SK-N-SH (cell line): ENCODE measurements at regions of chr20 and their contacts with region 1.

Region 1: DNA sequence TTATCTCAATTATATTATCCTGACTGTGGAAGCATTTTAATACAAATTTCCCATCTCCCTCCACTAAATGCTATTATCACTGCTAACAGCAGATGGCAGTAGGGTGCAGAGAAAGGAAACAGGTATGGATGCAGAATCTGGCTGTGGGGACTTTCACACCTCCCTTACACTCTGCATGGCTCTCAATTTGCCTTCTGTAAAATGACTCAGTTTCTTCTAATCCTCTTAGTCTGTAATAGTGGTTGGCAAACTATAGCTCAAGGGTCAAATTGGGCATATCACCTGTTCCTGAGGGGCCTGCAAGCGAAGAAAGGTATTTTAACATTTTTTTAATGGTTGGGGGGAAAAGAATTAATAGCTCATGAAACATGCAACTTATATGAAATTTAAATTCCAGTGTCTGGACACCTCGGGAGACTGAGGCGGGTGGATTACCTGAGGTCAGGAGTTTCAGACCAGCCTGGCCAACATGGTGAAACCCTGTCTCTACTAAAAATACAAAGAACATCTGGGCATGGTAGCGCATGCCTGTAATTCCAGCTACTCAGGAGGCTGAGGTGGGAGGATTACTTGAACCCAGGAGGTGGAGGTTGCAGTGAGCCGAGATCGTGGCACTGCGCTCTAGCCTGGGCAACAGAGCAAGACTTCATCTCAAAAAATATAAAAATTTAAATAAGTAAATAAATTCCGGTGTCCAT is 83.5 kb downstream of the ZMYND8 start:
- DNase-seq: peak; percentile 73
- H3K4me3 ChIP-seq: no peak overlapping the region; a peak in 1 of 4 replicates
- H3K27ac ChIP-seq: peak overlapping the region in 1 of 2 experiments; percentile 97; a peak in 2 of 4 replicates
- H3K4me1 ChIP-seq: peaks cover 20 to 48% of the 10 kb centered on the region in 2 experiments
- H3K27me3 ChIP-seq: no peaks in the 10 kb centered on the region
- CTCF ChIP-seq: peak; percentile 95
- EP300 ChIP-seq: no peak
- RAD21 ChIP-seq: peak; percentile 95

Region 2: GRCh38 chr20:47055699-47056369 is 217.2 kb before region 1 on chr20:
- CTCF ChIA-PET with region 1: no interaction called
- POLR2A ChIA-PET with region 1: no interaction called
- DNase-seq: no peak
- H3K4me3 ChIP-seq: no peak overlapping the region
- H3K27ac ChIP-seq: no peak overlapping the region
- H3K4me1 ChIP-seq: peaks cover 0 to 4% of the 10 kb centered on the region in 2 experiments; a peak in 1 of 4 replicates
- H3K27me3 ChIP-seq: no peaks in the 10 kb centered on the region; the same call in 1 of the 2 replicates
- CTCF ChIP-seq: no peak
- EP300 ChIP-seq: no peak
- RAD21 ChIP-seq: no peak

Region 3: GRCh38 chr20:47066484-47067186 is 206.4 kb before region 1 on chr20:
- CTCF ChIA-PET with region 1: no interaction called
- POLR2A ChIA-PET with region 1: no interaction called
- DNase-seq: no peak
- H3K4me3 ChIP-seq: no peak overlapping the region
- H3K27ac ChIP-seq: no peak overlapping the region
- H3K4me1 ChIP-seq: no peaks in the 10 kb centered on the region; a peak in 1 of 4 replicates
- H3K27me3 ChIP-seq: no peaks in the 10 kb centered on the region; the same call in 1 of the 2 replicates
- CTCF ChIP-seq: no peak
- EP300 ChIP-seq: no peak
- RAD21 ChIP-seq: no peak

Region 4: DNA sequence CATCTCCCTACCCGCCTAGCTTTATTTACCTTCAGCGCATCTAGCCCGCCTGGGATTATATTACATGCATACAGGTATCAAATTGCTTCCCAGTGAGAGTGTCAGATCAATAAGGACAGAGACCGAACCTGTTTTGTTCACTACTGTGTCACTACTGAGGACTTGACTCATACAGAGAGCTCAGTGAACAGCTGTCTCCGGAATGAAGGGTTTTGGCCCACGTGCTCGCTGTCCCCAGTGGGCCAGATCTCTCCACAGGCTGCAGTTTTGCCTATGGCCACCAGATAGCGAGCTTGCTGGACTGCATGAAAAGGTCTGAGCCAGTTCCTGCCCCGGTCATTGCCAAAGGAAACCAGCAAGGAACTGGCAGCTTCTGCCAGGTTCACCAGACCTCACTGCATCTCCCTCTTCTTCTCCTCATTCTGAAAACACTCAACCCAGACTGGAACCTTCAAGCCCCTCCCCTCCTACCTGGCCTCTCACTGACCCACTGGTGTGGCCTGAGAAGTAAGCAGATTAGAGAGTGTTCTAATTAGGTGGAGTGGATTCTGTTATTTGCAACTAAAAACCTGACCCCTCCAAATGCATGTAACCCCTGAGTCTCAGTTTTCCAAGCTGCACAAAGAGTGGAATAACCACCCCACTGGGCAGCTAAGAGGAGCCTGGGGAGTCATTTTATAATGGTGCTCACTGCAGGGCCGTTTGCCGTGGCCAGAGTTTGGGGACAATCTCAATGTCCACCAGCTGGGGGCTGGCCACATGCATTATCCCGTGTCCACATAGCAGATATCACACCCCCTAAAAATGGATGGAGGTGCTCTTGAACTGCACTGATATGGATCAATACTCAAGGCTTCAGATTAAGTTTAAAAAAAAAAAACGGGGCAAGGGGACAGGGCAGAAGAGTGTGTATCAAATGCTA is 67.2 kb before region 1 on chr20:
- CTCF ChIA-PET with region 1: interaction called, 48 read pairs
- POLR2A ChIA-PET with region 1: no interaction called
- DNase-seq: peak; percentile 78
- H3K4me3 ChIP-seq: no peak overlapping the region
- H3K27ac ChIP-seq: no peak overlapping the region; a peak in 1 of 4 replicates
- H3K4me1 ChIP-seq: peaks cover 0 to 3% of the 10 kb centered on the region in 2 experiments; a peak in 1 of 4 replicates
- H3K27me3 ChIP-seq: no peaks in the 10 kb centered on the region
- CTCF ChIP-seq: peak; percentile 78
- EP300 ChIP-seq: no peak
- RAD21 ChIP-seq: peak; percentile 74

Region 5: GRCh38 chr20:47286681-47287080 is 13.6 kb after region 1 on chr20:
- CTCF ChIA-PET with region 1: interaction called, 56 read pairs
- POLR2A ChIA-PET with region 1: no interaction called
- DNase-seq: no peak
- H3K4me3 ChIP-seq: no peak overlapping the region
- H3K27ac ChIP-seq: no peak overlapping the region
- H3K4me1 ChIP-seq: peaks cover 0 to 10% of the 10 kb centered on the region in 2 experiments; a peak in 2 of 4 replicates
- H3K27me3 ChIP-seq: no peaks in the 10 kb centered on the region
- CTCF ChIP-seq: no peak
- EP300 ChIP-seq: no peak
- RAD21 ChIP-seq: no peak

Region 6: DNA sequence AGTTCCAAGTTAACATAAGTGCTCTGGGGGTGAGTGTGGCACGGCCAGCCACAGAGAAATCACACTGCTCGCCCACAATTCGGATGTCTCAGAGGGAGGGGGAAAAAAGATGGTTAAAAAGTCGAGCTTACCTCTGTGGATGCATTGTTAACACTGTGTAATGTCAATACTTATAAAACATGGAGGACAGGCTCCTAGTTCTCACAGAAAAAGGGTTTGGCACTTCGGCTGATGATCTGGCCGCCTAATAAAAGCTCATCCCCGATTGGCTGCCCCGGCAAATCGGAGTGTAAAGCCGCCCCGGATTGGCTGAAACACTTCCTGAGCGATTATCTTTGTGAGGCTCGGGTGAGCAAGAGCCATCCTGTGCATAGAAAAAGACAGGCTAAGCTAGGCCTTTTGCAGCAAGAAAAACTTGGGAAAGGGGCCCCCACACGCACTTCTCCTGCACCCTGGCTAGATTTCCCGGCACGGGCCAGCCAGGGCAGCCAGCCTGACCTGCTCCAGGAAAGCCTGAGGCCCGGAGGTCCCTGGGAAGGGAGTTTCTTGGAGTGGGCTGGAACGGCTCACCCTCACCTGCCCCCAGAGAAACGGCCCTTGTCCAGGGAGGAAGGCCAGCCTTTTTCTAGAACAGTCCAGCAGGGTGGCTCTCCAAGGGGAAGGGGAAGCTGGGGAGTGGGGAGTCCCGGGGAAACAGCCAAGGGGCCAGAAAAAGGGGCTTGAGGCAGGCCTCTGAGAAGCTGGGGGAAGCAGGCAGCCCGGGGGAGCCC is 83.7 kb after region 1 on chr20 and contains the start of gene ZMYND8:
- CTCF ChIA-PET with region 1: interaction called, 99 read pairs
- POLR2A ChIA-PET with region 1: interaction called, 4 read pairs
- DNase-seq: peak; percentile 87
- H3K4me3 ChIP-seq: peak within 1 kb of the TSS; percentile 42 to 52
- H3K27ac ChIP-seq: peak within 1 kb of the TSS; percentile 97 to 100
- H3K4me1 ChIP-seq: peaks cover 75 to 89% of the 10 kb centered on the region in 2 experiments
- H3K27me3 ChIP-seq: no peaks in the 10 kb centered on the region
- CTCF ChIP-seq: no peak
- EP300 ChIP-seq: no peak
- RAD21 ChIP-seq: no peak
- polyA plus RNA-seq, gene ZMYND8: 20.6 and 25.3 TPM in 2 replicates

Region 7: GRCh38 chr20:47392015-47392720 is 119.1 kb after region 1 on chr20:
- CTCF ChIA-PET with region 1: interaction called, 546 read pairs
- POLR2A ChIA-PET with region 1: interaction called, 3 read pairs
- DNase-seq: peak; percentile 23
- H3K4me3 ChIP-seq: no peak overlapping the region
- H3K27ac ChIP-seq: peak overlapping the region in 1 of 2 experiments; percentile 70; a peak in 2 of 4 replicates
- H3K4me1 ChIP-seq: no peaks in the 10 kb centered on the region
- H3K27me3 ChIP-seq: no peaks in the 10 kb centered on the region
- CTCF ChIP-seq: no peak
- EP300 ChIP-seq: no peak
- RAD21 ChIP-seq: no peak